Activated CD8-positive, alpha-beta memory T cell treated with anti-CD3 and anti-CD28 coated beads, Interleukin-2, amount 10 ng/mL, durations not matched to agents 7 days and 5 days (primary cell): ENCODE measurements at regions of chr16 and their contacts with region 1.

Region 1: GRCh38 chr16:2968738-2969544 is at the start of gene PAQR4:
- DNase-seq: peak; percentile 89
- ATAC-seq: peak; percentile 75
- H3K4me3 Mint-ChIP-seq: peak within 1 kb of the TSS; percentile 73
- H3K27ac Mint-ChIP-seq: peak within 1 kb of the TSS; percentile 77
- H3K4me1 Mint-ChIP-seq: peaks cover 38% of the 10 kb centered on the region
- H3K27me3 Mint-ChIP-seq: peaks cover 18% of the 10 kb centered on the region
- total RNA-seq, gene PAQR4: 58.7 to 62.9 TPM

Region 2: GRCh38 chr16:2874912-2875362 is 94.0 kb before region 1 on chr16:
- CTCF ChIA-PET with region 1: no interaction called
- DNase-seq: peak; percentile 81
- ATAC-seq: peak; percentile 100
- H3K4me3 Mint-ChIP-seq: no peak overlapping the region
- H3K27ac Mint-ChIP-seq: no peak overlapping the region
- H3K4me1 Mint-ChIP-seq: peaks cover 3% of the 10 kb centered on the region
- H3K27me3 Mint-ChIP-seq: no peaks in the 10 kb centered on the region

Region 3: DNA sequence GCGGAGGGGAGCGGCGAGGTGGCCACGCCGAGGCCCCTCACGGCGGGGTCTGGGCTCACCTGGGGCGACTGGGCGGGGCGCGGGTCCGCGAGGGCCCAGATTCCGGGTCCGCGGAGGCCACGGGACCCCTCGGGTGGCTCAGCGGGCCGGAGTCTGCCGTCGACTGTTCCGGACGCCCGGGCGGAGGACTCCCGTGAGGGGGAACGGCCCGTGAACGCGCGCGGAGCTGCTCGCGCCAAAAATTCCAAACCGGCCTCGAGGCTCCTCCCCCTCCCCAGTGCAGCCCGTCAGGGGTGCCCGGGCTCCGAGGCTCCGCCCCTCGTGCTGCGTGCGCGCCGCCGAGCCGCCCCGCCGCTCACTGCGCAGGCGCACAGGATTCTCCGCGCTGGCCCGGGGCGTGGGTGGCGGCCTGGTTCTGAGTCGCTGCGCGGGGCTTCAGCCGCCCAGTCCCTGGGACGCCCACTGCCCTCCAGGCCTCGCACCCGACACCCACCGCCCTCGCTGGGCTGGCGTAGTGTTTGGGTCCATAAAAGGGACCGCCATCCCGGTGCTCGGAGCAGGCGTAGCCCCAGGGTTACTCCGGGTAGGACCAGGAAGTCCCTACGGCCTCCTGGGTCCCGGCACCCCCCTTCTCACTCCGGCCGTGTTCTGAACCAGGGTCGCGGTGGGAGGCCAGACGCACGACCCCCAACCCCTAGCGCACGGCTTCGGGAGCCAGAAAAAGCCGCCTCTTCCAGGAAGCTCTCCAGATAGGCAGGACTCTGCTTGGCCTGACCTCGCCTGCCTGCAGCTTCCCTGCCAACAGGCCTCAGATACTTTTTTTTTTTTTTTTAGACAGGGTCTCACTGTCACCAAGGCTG is 11.5 kb after region 1 on chr16 and contains the start of gene PKMYT1:
- CTCF ChIA-PET with region 1: interaction called, 28 read pairs
- DNase-seq: peak; percentile 96
- ATAC-seq: peak; percentile 90
- H3K4me3 Mint-ChIP-seq: peak within 1 kb of the TSS; percentile 93
- H3K27ac Mint-ChIP-seq: peak within 1 kb of the TSS; percentile 86
- H3K4me1 Mint-ChIP-seq: peaks cover 33% of the 10 kb centered on the region
- H3K27me3 Mint-ChIP-seq: peaks cover 4% of the 10 kb centered on the region
- total RNA-seq, gene PKMYT1: 146 to 199 TPM

Region 4: DNA sequence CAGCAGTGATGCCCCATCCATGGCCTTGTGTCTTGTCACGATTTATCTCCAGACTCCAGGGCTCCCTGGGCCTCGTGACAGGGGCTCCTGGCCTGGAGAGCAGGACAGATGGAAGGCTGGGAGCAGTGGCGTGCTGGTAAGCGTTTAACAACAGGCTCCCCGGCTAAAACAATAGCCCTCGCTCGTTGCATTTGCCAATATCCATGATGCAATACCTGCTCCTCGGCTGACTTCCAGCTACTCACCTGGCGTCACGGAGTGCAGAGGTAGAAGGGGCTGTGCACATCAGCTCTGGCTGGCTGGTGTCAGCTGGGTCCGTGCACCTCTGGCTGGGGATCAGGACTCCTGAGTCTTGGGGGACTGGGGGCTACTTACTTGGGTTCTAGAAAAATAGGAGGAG is 69.3 kb after region 1 on chr16:
- CTCF ChIA-PET with region 1: no interaction called
- DNase-seq: no peak
- ATAC-seq: no peak
- H3K4me3 Mint-ChIP-seq: no peak overlapping the region
- H3K27ac Mint-ChIP-seq: no peak overlapping the region
- H3K4me1 Mint-ChIP-seq: peaks cover 8% of the 10 kb centered on the region
- H3K27me3 Mint-ChIP-seq: peaks cover 61% of the 10 kb centered on the region